ENCODE measurements at regions of chr4 and their contacts with region 1.

Region 1: GRCh38 chr4:155787113-155787710 is 28.4 kb downstream of the GUCY1B1 start:
- DNase-seq: no peak
- ATAC-seq: peak; percentile 57
- H3K4me3 Mint-ChIP-seq: no peak overlapping the region
- H3K27ac Mint-ChIP-seq: no peak overlapping the region
- H3K4me1 Mint-ChIP-seq: no peaks in the 10 kb centered on the region
- H3K27me3 Mint-ChIP-seq: no peaks in the 10 kb centered on the region
- CTCF ChIP-seq: peak; percentile 17

Region 2: DNA sequence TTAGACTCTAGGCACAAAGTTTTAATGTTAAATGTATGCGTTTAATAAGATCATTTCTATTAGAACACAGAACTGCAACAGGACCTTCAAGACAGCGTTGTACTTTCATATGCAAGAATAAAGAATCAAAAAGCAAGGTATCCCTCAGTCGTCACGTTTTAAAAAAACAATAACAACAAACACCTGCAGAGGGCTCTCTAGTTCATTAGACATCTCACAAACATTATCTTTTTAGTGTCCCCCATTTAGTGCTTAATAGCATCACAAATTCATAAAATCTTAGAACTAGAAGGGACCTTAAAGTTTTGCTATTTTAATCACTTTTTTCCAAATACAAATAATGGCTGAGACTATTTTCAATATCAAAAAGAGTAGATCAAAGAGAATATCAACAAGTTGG is 1532.2 kb before region 1 on chr4:
- CTCF ChIA-PET with region 1: no interaction called
- POLR2A ChIA-PET with region 1: no interaction called
- intact Hi-C with region 1: no loop called
- DNase-seq: no peak
- ATAC-seq: no peak
- H3K4me3 Mint-ChIP-seq: no peak overlapping the region
- H3K27ac Mint-ChIP-seq: no peak overlapping the region
- H3K4me1 Mint-ChIP-seq: no peaks in the 10 kb centered on the region
- H3K27me3 Mint-ChIP-seq: peaks cover 3% of the 10 kb centered on the region
- CTCF ChIP-seq: no peak

Region 3: DNA sequence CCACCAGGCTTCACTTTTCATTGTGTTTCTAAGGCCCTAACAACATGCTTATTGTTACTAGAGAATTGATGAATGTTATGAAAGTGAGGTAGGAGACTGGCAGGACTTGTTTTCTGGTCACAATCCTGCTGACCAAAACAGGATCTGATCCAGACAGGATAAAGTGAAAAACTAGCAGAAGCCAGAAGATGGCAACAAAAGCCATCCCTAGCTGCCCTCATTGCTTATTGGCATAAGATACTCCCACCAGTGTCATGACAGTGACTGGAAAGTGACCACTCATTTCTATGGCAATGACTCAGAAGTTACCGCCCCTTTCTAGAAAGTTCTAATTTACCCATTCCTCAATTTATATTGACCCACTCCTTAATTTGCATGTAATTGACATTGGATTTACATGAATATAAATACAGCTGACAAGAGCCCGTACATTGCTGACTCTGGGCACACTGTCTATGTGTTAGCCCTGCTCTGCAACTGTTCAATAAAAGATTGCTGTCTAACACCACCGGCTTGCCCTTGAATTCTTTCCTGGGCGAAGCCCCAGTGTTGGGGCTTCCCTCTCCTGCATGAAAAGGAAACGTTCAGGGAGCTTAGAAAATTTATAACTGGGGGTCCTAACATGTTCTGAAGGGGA is 1144.7 kb before region 1 on chr4:
- CTCF ChIA-PET with region 1: no interaction called
- POLR2A ChIA-PET with region 1: no interaction called
- intact Hi-C with region 1: loop called (anchors 5 kb)
- DNase-seq: no peak
- ATAC-seq: no peak
- H3K4me3 Mint-ChIP-seq: no peak overlapping the region
- H3K27ac Mint-ChIP-seq: no peak overlapping the region
- H3K4me1 Mint-ChIP-seq: no peaks in the 10 kb centered on the region
- H3K27me3 Mint-ChIP-seq: peaks cover 18% of the 10 kb centered on the region
- CTCF ChIP-seq: no peak

Region 4: GRCh38 chr4:154982187-154983047 is 804.8 kb before region 1 on chr4:
- CTCF ChIA-PET with region 1: interaction called, 3 read pairs
- POLR2A ChIA-PET with region 1: no interaction called
- intact Hi-C with region 1: loop called (anchors 5 kb)
- DNase-seq: no peak
- ATAC-seq: no peak
- H3K4me3 Mint-ChIP-seq: no peak overlapping the region
- H3K27ac Mint-ChIP-seq: no peak overlapping the region
- H3K4me1 Mint-ChIP-seq: no peaks in the 10 kb centered on the region
- H3K27me3 Mint-ChIP-seq: no peaks in the 10 kb centered on the region
- CTCF ChIP-seq: no peak

Region 5: DNA sequence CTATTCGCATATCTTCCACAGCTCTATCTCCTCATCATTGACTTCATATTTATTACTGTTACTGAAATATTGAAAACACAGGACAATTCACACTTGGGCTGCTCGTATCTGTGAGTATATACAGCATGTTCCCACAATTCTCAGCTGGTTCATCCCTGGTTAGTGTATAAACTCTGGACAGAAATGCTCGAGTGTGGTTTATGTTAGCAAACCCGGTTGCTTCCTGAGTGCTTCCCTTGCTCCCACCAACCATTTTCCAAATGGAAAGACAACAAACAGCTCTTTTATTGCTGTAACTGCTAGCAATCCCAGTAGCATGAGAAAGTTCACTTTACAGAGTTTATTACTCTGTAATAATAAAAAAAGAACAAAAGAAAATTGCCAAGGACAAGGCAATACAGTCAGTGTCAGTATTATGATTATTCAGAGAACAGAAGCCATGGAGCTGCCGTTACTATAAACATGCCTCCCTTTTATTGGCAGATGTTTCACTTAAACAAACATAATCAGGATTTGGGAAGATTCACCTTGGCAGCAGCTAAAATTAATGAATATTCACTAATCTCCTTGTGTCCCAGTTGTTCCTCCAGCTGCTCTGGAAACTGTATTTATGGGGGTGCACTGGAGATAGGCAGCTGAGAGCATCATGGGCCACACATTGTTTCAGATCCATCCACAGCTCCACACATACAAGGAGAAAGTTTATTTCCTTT is 254.7 kb before region 1 on chr4:
- CTCF ChIA-PET with region 1: no interaction called
- POLR2A ChIA-PET with region 1: no interaction called
- intact Hi-C with region 1: loop called (anchors 5 kb)
- DNase-seq: no peak
- ATAC-seq: no peak
- H3K4me3 Mint-ChIP-seq: no peak overlapping the region
- H3K27ac Mint-ChIP-seq: no peak overlapping the region
- H3K4me1 Mint-ChIP-seq: no peaks in the 10 kb centered on the region
- H3K27me3 Mint-ChIP-seq: no peaks in the 10 kb centered on the region
- CTCF ChIP-seq: no peak

Region 6: GRCh38 chr4:155805016-155805415 is 17.8 kb after region 1 on chr4:
- CTCF ChIA-PET with region 1: no interaction called
- POLR2A ChIA-PET with region 1: no interaction called
- intact Hi-C with region 1: no loop called
- DNase-seq: no peak
- ATAC-seq: no peak
- H3K4me3 Mint-ChIP-seq: no peak overlapping the region
- H3K27ac Mint-ChIP-seq: no peak overlapping the region
- H3K4me1 Mint-ChIP-seq: no peaks in the 10 kb centered on the region
- H3K27me3 Mint-ChIP-seq: no peaks in the 10 kb centered on the region
- CTCF ChIP-seq: no peak

Measured in activated B cell treated with CpG ODN at 0.5 μM for 24 hours (primary cell).